ENCODE measurements at regions of chrX and their contacts with region 1.

Region 1: GRCh38 chrX:38754102-38754790 is 47.0 kb upstream of the MID1IP1 start:
- DNase-seq: peak; percentile 62
- H3K4me3 ChIP-seq: no peak overlapping the region
- H3K27ac ChIP-seq: no peak overlapping the region
- H3K4me1 ChIP-seq: no peaks in the 10 kb centered on the region
- H3K27me3 ChIP-seq: peaks cover 0 to 2% of the 10 kb centered on the region in 2 experiments
- CTCF ChIP-seq: peak; percentile 33 to 46
- POLR2A ChIP-seq: no peak

Region 2: DNA sequence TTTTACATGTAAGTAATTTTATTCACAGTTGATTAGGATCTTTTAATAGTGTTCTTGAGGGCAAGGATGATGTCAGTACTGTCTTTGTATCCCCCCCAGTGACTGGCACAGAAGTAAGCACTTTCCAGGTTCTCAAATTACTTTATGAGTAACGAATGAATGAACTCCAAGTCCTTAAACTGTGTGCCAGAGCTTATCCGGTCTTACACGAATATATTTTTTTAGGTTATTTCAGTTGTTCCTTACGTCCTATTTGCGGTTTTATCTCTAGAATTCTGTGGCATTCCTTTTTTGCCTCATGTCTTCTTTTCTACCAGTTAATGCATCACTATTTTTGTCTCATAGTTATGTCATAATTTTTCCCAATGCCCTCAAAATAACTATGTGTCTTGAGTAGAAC is 59.9 kb before region 1 on chrX:
- CTCF ChIA-PET with region 1: no interaction called
- POLR2A ChIA-PET with region 1: no interaction called
- dilution Hi-C with region 1: no loop called
- intact Hi-C with region 1: no loop called
- DNase-seq: no peak
- H3K4me3 ChIP-seq: no peak overlapping the region
- H3K27ac ChIP-seq: no peak overlapping the region
- H3K4me1 ChIP-seq: no peaks in the 10 kb centered on the region
- H3K27me3 ChIP-seq: no peaks in the 10 kb centered on the region
- CTCF ChIP-seq: no peak
- POLR2A ChIP-seq: no peak

Region 3: GRCh38 chrX:39117101-39117500 is 362.9 kb after region 1 on chrX:
- CTCF ChIA-PET with region 1: no interaction called
- POLR2A ChIA-PET with region 1: no interaction called
- dilution Hi-C with region 1: no loop called
- intact Hi-C with region 1: no loop called
- DNase-seq: no peak
- H3K4me3 ChIP-seq: no peak overlapping the region
- H3K27ac ChIP-seq: no peak overlapping the region
- H3K4me1 ChIP-seq: no peaks in the 10 kb centered on the region
- H3K27me3 ChIP-seq: no peaks in the 10 kb centered on the region
- CTCF ChIP-seq: no peak
- POLR2A ChIP-seq: no peak

Region 4: GRCh38 chrX:39242187-39242586 is 487.9 kb after region 1 on chrX:
- CTCF ChIA-PET with region 1: interaction called, 3 read pairs
- POLR2A ChIA-PET with region 1: no interaction called
- dilution Hi-C with region 1: no loop called
- intact Hi-C with region 1: loop called (anchors 5 kb)
- DNase-seq: peak; percentile 1
- H3K4me3 ChIP-seq: no peak overlapping the region
- H3K27ac ChIP-seq: no peak overlapping the region
- H3K4me1 ChIP-seq: no peaks in the 10 kb centered on the region
- H3K27me3 ChIP-seq: no peaks in the 10 kb centered on the region
- CTCF ChIP-seq: peak; percentile 25 to 43
- POLR2A ChIP-seq: no peak